ENCODE measurements at regions of chr7 and their contacts with region 1.

Region 1: GRCh38 chr7:116525913-116526861 is 1.4 kb downstream of the CAV1 start:
- DNase-seq: peak; percentile 81 to 93 (median 86)
- ATAC-seq: peak; percentile 83
- H3K4me3 ChIP-seq: peak overlapping the region; percentile 51 to 57
- H3K27ac ChIP-seq: peak overlapping the region; percentile 90 to 94
- H3K4me1 ChIP-seq: peaks cover 14 to 64% of the 10 kb centered on the region in 2 donors
- H3K27me3 ChIP-seq: peaks cover 0 to 45% of the 10 kb centered on the region in 2 donors
- CTCF ChIP-seq: peak; percentile 84 to 92

Region 2: DNA sequence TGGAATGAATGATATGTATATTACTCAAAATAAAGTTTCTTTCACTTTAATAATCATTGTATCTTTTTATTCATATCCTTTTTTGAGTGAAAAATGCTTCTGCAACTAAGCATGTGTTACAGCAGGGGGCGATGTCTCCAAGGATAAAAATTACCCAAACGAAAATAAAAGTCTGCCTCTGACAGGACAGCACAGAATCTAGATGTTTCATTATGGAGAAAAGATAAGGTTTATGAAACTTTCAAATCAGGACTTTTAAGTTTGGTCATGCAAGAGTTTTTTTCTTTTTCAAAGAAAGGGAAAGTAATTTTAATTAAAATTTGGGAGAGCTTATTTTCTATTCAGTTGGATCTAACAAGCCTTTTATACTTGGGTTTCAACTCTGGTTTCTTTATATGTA is 267.5 kb before region 1 on chr7:
- intact Hi-C with region 1: loop called in 1 of 2 experiments (anchors 10 kb)
- DNase-seq: peak in 2 of 4 donors; percentile 65 to 79
- ATAC-seq: peak; percentile 87
- H3K4me3 ChIP-seq: no peak overlapping the region
- H3K27ac ChIP-seq: peak overlapping the region in 1 of 2 donors; percentile 1
- H3K4me1 ChIP-seq: peaks cover 0 to 7% of the 10 kb centered on the region in 2 donors
- H3K27me3 ChIP-seq: no peaks in the 10 kb centered on the region
- CTCF ChIP-seq: peak; percentile 62 to 74

Measured in left lung (tissue), 14 donors.